ENCODE measurements at regions of chr16 and their contacts with region 1.

Region 1: GRCh38 chr16:89945670-89946069 is 2.9 kb upstream of the DEF8 start:
- DNase-seq: no peak
- H3K4me3 ChIP-seq: no peak overlapping the region
- H3K27ac ChIP-seq: no peak overlapping the region
- H3K4me1 ChIP-seq: peaks cover 0 to 7% (median 5%) of the 10 kb centered on the region in 4 experiments; a peak in 5 of 7 replicates
- H3K27me3 ChIP-seq: peaks cover 3 to 28% (median 22%) of the 10 kb centered on the region in 4 experiments
- CTCF ChIP-seq: peak in 2 of 3 experiments; percentile 9 to 11; a peak in 3 of 4 replicates
- EP300 ChIP-seq: no peak
- POLR2A ChIP-seq: no peak
- RAD21 ChIP-seq: peak in 1 of 2 experiments; percentile 28; a peak in 1 of 4 replicates

Region 2: GRCh38 chr16:89972244-89973234 is 26.9 kb after region 1 on chr16:
- CTCF ChIA-PET with region 1: interaction called, 5 read pairs
- POLR2A ChIA-PET with region 1: interaction called, 11 read pairs
- DNase-seq: peak; percentile 67 to 95
- H3K4me3 ChIP-seq: peak overlapping the region; percentile 77 to 97 (median 94)
- H3K27ac ChIP-seq: peak overlapping the region; percentile 99
- H3K4me1 ChIP-seq: peaks cover 0 to 8% (median 3%) of the 10 kb centered on the region in 4 experiments; a peak in 3 of 7 replicates
- H3K27me3 ChIP-seq: peaks cover 0 to 6% (median 0%) of the 10 kb centered on the region in 4 experiments; a peak in 2 of 7 replicates
- CTCF ChIP-seq: no peak
- EP300 ChIP-seq: no peak
- POLR2A ChIP-seq: peak; percentile 81 to 98
- RAD21 ChIP-seq: no peak

Measured in H1 (cell line).